Endothelial cell of umbilical vein (primary cell): ENCODE measurements at regions of chr20 and their contacts with region 1.

Region 1: GRCh38 chr20:6767536-6768227 is at the start of gene BMP2:
- DNase-seq: peak; percentile 74
- H3K4me3 ChIP-seq: peak within 1 kb of the TSS; percentile 87 to 99 (median 92)
- H3K27ac ChIP-seq: peak within 1 kb of the TSS; percentile 61
- H3K4me1 ChIP-seq: peaks cover 21% of the 10 kb centered on the region
- H3K27me3 ChIP-seq: no peaks in the 10 kb centered on the region
- CTCF ChIP-seq: no peak
- POLR2A ChIP-seq: peak; percentile 46
- total RNA-seq, gene BMP2: 11.1 and 15.7 TPM in 2 replicates

Region 2: DNA sequence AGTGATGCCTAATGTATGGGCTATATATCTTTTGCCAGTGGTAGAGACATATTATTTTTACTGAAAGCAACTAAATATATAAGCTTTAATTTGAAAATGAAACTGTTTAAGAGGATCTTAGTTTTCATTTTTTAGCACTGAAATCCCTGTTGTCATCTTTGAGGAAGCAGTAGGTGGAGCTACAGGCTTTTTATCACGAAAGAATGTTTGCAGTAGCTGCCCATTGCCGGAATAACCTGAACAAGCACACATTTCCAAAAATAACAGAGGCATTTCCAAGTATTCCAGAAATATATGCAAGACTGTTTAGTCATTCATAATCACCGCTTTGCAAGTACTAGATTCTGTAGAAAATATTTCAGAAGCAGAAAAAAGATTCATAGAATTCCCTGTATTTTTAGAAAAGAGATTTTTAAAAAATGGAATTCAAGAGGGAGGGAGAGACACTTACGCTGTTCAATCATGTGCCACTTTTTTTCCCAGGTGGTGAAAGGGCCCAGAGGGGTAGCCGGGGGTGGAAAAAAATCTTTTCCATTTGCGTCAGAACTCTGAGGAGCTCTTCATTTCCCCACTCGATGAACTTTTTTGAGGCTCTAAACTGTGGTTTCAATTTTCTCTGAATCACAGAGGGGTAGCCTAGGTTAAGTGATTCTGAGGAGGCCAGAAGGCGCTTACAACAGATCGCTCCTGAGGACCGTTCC is 502.3 kb before region 1 on chr20:
- CTCF ChIA-PET with region 1: interaction called, 14 read pairs
- POLR2A ChIA-PET with region 1: no interaction called
- dilution Hi-C with region 1: no loop called
- intact Hi-C with region 1: loop called (anchors 1 kb)
- DNase-seq: peak; percentile 82
- H3K4me3 ChIP-seq: peak overlapping the region in 1 of 3 experiments; percentile 59
- H3K27ac ChIP-seq: peak overlapping the region; percentile 18
- H3K4me1 ChIP-seq: peaks cover 10% of the 10 kb centered on the region
- H3K27me3 ChIP-seq: peaks cover 0 to 4% of the 10 kb centered on the region in 2 experiments
- CTCF ChIP-seq: peak; percentile 11 to 29
- POLR2A ChIP-seq: no peak

Region 3: GRCh38 chr20:6636209-6637159 is 131.2 kb before region 1 on chr20:
- CTCF ChIA-PET with region 1: interaction called, 45 read pairs
- POLR2A ChIA-PET with region 1: no interaction called
- dilution Hi-C with region 1: no loop called
- intact Hi-C with region 1: loop called (anchors 1 kb)
- DNase-seq: peak; percentile 85
- H3K4me3 ChIP-seq: no peak overlapping the region
- H3K27ac ChIP-seq: no peak overlapping the region
- H3K4me1 ChIP-seq: no peaks in the 10 kb centered on the region
- H3K27me3 ChIP-seq: no peaks in the 10 kb centered on the region
- CTCF ChIP-seq: peak; percentile 52 to 62
- POLR2A ChIP-seq: no peak

Region 4: GRCh38 chr20:6692568-6693173 is 75.0 kb before region 1 on chr20:
- CTCF ChIA-PET with region 1: no interaction called
- POLR2A ChIA-PET with region 1: no interaction called
- dilution Hi-C with region 1: no loop called
- intact Hi-C with region 1: no loop called
- DNase-seq: no peak
- H3K4me3 ChIP-seq: no peak overlapping the region
- H3K27ac ChIP-seq: no peak overlapping the region
- H3K4me1 ChIP-seq: no peaks in the 10 kb centered on the region
- H3K27me3 ChIP-seq: no peaks in the 10 kb centered on the region
- CTCF ChIP-seq: no peak
- POLR2A ChIP-seq: no peak

Region 5: GRCh38 chr20:6708010-6708409 is 59.7 kb before region 1 on chr20:
- CTCF ChIA-PET with region 1: interaction called, 3 read pairs
- POLR2A ChIA-PET with region 1: no interaction called
- dilution Hi-C with region 1: no loop called
- intact Hi-C with region 1: loop called (anchors 2 kb)
- DNase-seq: peak; percentile 91
- H3K4me3 ChIP-seq: no peak overlapping the region
- H3K27ac ChIP-seq: peak overlapping the region; percentile 11
- H3K4me1 ChIP-seq: peaks cover 68% of the 10 kb centered on the region
- H3K27me3 ChIP-seq: no peaks in the 10 kb centered on the region
- CTCF ChIP-seq: no peak
- POLR2A ChIP-seq: no peak

Region 6: GRCh38 chr20:6819605-6820004 is 51.9 kb after region 1 on chr20:
- CTCF ChIA-PET with region 1: interaction called, 9 read pairs
- POLR2A ChIA-PET with region 1: no interaction called
- dilution Hi-C with region 1: no loop called
- intact Hi-C with region 1: loop called (anchors 1 kb)
- DNase-seq: peak; percentile 46
- H3K4me3 ChIP-seq: no peak overlapping the region
- H3K27ac ChIP-seq: no peak overlapping the region
- H3K4me1 ChIP-seq: no peaks in the 10 kb centered on the region
- H3K27me3 ChIP-seq: peaks cover 0 to 2% of the 10 kb centered on the region in 2 experiments
- CTCF ChIP-seq: peak; percentile 16 to 27
- POLR2A ChIP-seq: no peak

Region 7: DNA sequence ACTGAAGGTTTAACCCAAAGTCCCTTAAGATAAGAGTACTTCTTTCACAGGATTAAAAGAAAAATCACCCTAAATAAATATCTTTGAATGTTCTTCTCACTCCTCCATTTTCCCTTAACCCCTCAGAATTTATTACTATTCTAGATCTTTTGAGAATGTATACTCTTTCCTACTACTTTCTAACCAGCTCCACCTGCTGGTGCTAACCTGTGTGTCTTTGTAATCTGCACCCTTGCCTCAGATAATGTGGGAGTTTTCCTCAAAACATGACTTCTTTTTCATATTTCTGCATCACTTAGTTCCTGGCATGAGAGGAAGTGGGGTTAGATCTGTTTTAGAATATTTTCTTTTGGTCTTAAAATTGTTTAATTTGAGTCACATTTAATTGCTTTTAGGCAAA is 394.0 kb after region 1 on chr20:
- CTCF ChIA-PET with region 1: no interaction called
- POLR2A ChIA-PET with region 1: no interaction called
- dilution Hi-C with region 1: no loop called
- intact Hi-C with region 1: loop called (anchors 5 kb)
- DNase-seq: peak; percentile 36
- H3K4me3 ChIP-seq: no peak overlapping the region
- H3K27ac ChIP-seq: no peak overlapping the region
- H3K4me1 ChIP-seq: peaks cover 16% of the 10 kb centered on the region
- H3K27me3 ChIP-seq: no peaks in the 10 kb centered on the region
- CTCF ChIP-seq: peak in 1 of 2 donors; percentile 35
- POLR2A ChIP-seq: no peak